ENCODE measurements at regions of chr13 and their contacts with region 1.

Region 1: GRCh38 chr13:21458813-21459701 is at the start of gene ZDHHC20:
- DNase-seq: peak; percentile 72 to 81
- ATAC-seq: peak; percentile 90 to 92
- H3K4me3 ChIP-seq: peak within 1 kb of the TSS; percentile 88 to 99 (median 94)
- H3K27ac ChIP-seq: peak within 1 kb of the TSS; percentile 79 to 98 (median 89)
- H3K4me1 ChIP-seq: peaks cover 10 to 15% of the 10 kb centered on the region in 2 donors
- H3K27me3 ChIP-seq: no peaks in the 10 kb centered on the region
- CTCF ChIP-seq: no peak
- POLR2A ChIP-seq: peak; percentile 66 to 74
- total RNA-seq, gene ZDHHC20: 14.6 to 29.2 (median 23.1) TPM

Region 2: DNA sequence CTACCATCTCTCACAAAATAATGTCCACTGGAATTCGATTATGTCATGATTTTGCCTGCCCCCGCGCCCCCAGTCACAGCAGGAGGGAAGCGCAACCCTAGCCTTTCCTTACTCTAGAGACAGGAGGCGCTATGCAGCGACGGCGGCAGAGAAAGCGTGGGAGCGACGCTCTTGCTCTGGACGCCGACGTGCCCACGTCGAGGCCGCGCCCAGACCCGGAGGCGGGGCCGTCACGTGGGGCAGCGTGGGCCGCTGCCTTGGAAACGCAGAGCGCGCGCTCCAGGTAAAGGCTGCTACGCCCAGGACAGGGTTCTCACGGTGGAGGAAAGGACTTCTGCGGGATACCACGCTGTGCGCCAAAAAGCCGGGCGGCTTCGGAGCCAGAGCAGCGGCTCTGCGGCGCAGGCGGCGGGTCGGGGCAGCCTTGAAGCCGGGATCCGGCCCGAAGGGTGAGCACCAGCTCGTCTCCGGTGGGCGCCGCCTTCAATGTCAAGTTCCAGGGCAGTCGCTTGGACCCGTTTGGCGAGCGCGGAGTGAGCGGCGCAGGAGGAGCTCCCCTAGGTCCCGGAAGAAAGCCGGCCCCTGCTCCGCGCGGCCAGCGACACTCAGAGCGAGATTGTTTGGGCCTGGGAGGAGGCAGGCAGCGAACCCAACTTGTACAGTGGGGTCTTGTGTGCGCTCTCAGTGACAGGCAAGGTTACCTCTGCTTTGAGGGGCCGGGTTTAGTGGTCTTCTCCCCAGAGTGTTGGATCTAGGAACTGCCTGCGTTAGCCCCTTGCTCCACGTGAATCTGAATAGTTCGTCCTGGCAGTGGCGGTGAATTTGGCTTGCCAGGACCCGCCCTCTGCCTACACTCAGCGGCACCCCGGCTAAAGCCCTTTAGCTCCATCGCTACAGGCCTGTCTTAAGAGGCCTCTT is 160.9 kb before region 1 on chr13:
- in situ Hi-C with region 1: no loop called
- intact Hi-C with region 1: loop called (anchors 5 kb)
- DNase-seq: peak; percentile 38 to 68
- ATAC-seq: peak; percentile 98 to 99
- H3K4me3 ChIP-seq: peak overlapping the region; percentile 76 to 100 (median 90)
- H3K27ac ChIP-seq: peak overlapping the region; percentile 29 to 65 (median 47)
- H3K4me1 ChIP-seq: peaks cover 11 to 14% of the 10 kb centered on the region in 2 donors
- H3K27me3 ChIP-seq: no peaks in the 10 kb centered on the region
- CTCF ChIP-seq: peak; percentile 78 to 91 (median 80)
- POLR2A ChIP-seq: no peak

Region 3: GRCh38 chr13:21603531-21604448 is 144.7 kb after region 1 on chr13 and contains the start of gene MICU2:
- in situ Hi-C with region 1: no loop called
- intact Hi-C with region 1: loop called (anchors 5 kb)
- DNase-seq: peak; percentile 75 to 86
- ATAC-seq: peak; percentile 99
- H3K4me3 ChIP-seq: peak within 1 kb of the TSS; percentile 76 to 83 (median 78)
- H3K27ac ChIP-seq: peak within 1 kb of the TSS; percentile 79 to 95 (median 94)
- H3K4me1 ChIP-seq: peaks cover 7 to 8% of the 10 kb centered on the region in 2 donors
- H3K27me3 ChIP-seq: no peaks in the 10 kb centered on the region
- CTCF ChIP-seq: peak in 4 of 5 experiments; percentile 16 to 44 (median 35)
- POLR2A ChIP-seq: peak; percentile 87 to 88
- total RNA-seq, gene MICU2: 83.6 to 126 (median 106) TPM

Measured in gastrocnemius medialis (tissue), 4 donors.